K562 (cell line): ENCODE measurements at regions of chr11 and their contacts with region 1.

Region 1: DNA sequence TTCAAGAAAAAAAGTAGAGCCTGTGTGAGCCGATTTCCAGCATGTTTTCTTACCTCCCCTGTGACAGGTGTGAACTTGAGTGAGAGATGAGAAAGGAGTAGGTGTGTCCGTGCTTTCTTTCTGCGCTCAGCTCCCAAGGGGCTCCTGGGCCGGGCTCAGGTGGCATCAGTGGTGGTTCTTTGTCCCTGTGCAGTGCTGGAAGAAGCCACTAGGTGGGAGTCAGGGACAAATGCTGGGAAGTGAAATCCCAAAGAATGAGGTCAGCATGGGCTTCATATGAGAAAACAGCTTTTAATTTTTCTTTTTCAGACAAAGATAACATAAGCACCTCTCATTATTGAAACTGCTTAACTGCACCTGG is 57.8 kb downstream of the PPFIBP2 start:
- DNase-seq: peak; percentile 51 to 69 (median 62)
- ATAC-seq: peak; percentile 92
- H3K4me3 ChIP-seq: no peak overlapping the region
- H3K27ac ChIP-seq: no peak overlapping the region
- H3K4me1 ChIP-seq: no peaks in the 10 kb centered on the region; a peak in 1 of 5 replicates
- H3K27me3 ChIP-seq: peaks cover 4 to 25% of the 10 kb centered on the region in 2 experiments; a peak in 4 of 5 replicates
- CTCF ChIP-seq: peak; percentile 75 to 90 (median 81)
- EP300 ChIP-seq: no peak
- POLR2A ChIP-seq: no peak
- RAD21 ChIP-seq: peak; percentile 91 to 95

Region 2: DNA sequence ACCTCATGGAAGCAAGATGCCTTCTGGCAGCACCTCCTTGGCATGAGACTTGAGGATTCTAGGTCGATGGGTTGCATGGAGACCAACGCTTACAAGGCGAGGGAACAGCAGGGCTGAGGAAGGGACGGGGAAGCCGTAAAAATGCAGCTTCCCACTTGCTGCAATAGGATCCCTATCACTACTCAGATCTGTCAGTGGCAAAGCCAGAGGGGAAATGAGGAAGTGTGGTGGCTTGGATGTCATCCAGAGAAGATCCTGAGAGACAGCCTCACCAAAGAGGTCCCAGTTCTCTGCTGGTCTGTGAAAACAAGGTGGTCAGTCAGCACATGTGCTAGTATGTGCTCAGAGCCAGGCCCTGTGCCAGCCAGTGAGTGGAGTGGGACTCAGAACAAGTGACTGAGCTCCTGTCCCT is 79.5 kb after region 1 on chr11:
- CTCF ChIA-PET with region 1: no interaction called
- POLR2A ChIA-PET with region 1: interaction called, 3 read pairs
- in situ Hi-C with region 1: loop called (anchors 5 kb)
- intact Hi-C with region 1: no loop called
- DNase-seq: peak in 1 of 4 experiments; percentile 20
- ATAC-seq: peak; percentile 38
- H3K4me3 ChIP-seq: no peak overlapping the region
- H3K27ac ChIP-seq: no peak overlapping the region
- H3K4me1 ChIP-seq: peaks cover 9 to 10% of the 10 kb centered on the region in 2 experiments; a peak in 3 of 5 replicates
- H3K27me3 ChIP-seq: peaks cover 0 to 24% of the 10 kb centered on the region in 2 experiments; a peak in 2 of 5 replicates
- CTCF ChIP-seq: no peak
- EP300 ChIP-seq: no peak
- POLR2A ChIP-seq: no peak
- RAD21 ChIP-seq: 0 out of 4 replicates have a peak, but pooled peaks of 1 of the 2 experiments have one; percentile 10

Region 3: DNA sequence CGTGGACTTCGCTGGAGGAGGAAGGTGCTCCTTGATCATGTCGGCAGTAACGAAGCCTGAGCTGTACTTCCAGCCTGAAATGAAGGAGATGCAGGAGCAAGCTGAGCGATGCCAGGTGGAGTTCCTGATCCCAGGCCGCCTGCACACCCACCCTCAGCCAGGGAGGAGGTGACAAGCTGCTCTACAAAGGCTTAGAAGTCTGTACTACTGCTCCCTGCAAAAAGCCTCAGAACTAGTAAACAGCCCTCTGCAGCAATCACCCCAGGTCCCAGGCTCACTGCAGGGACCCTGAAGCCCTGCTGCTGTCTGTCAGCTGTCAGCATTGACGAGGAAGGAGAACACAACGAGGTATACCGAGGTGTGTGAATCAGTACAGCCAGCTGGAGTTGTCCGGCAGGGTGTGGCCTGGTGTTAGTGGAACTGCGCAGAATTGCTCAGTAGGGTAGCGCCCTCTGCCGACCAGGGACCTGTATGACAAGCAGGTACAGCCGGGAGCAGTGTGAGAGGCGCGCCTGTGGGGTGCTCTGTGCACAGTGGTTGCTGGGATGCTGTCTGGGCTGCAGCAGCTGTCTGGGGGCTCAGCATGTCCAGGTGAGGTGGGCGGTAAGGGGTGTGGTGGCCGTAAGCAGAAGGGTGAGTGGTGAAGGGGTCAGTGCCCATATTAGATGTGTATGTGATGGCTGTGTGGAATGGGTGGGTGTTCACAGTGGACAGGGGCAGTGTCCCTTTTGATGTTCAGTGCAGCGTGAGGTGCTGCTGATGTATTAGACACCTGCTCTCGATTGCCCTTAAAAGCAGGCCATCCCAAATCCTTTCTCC is 94.1 kb after region 1 on chr11:
- CTCF ChIA-PET with region 1: interaction called, 7 read pairs
- POLR2A ChIA-PET with region 1: interaction called, 3 read pairs
- in situ Hi-C with region 1: no loop called
- intact Hi-C with region 1: loop called (anchors 2 kb)
- DNase-seq: peak; percentile 82 to 89 (median 87)
- ATAC-seq: peak; percentile 100
- H3K4me3 ChIP-seq: no peak overlapping the region
- H3K27ac ChIP-seq: no peak overlapping the region
- H3K4me1 ChIP-seq: no peaks in the 10 kb centered on the region
- H3K27me3 ChIP-seq: no peaks in the 10 kb centered on the region
- CTCF ChIP-seq: peak; percentile 90 to 92 (median 90)
- EP300 ChIP-seq: no peak
- POLR2A ChIP-seq: no peak
- RAD21 ChIP-seq: peak; percentile 78